HEK293 (cell line): ENCODE measurements at regions of chr9 and their contacts with region 1.

Region 1: DNA sequence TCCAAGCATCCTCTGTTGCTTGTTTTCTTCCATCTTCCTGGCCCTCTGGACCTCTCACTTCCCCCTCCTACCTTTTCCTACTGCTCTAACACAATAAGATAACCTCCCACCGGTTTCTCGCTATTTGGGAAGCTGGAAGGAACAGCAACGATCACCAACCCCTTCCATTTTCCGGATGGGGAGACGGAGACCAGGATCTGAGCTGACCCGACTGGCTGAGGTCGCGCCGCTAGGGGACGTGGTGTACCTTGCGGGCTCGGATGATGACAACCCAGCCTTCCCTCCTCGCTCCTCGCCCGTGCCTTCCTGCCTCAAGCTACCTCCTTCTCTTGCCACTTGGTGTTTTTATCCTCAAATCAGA is 1.9 kb downstream of the LPAR1 start:
- H3K4me3 ChIP-seq: peak overlapping the region; percentile 81
- H3K27ac ChIP-seq: no peak overlapping the region
- H3K4me1 ChIP-seq: peaks cover 8% of the 10 kb centered on the region
- CTCF ChIP-seq: peak; percentile 70

Region 2: DNA sequence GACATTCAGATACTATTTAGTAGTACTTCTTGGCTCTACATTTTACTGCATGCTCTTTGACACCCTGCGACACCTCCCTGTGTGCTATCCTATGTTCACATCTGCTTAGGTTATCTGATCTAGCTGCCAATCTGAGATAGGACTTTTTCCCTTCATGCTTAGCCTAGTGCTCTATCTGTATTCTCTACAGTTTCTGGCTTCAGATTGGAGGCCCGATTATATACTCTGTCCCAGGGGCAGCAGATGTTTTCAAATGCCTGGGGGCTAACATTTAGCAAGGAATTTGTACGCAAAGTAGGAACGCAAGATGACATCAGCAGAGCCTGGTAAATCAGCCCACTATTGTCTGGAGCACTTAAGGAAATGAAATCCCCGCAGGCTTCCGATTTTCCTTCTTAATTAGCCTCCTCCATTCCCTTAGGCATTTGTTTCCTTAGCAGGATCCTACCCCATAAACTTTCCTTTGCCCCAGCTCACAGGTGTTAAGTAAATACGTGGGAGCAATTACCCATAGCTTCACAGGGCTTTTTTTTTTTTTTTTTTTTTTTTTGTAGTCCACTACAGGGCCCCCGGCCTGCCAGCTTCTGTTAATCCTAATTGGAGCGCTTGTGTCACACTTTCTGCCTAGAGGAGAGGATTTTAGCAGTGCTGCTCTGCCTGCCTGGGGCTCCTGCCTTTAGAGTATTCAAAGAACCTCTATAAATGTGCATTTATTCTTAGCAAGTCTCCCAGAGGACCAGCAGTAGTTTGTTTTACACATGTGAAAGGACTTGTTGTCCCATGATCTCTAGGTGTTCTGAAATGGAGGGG is 63.0 kb after region 1 on chr9:
- CTCF ChIA-PET with region 1: interaction called, 10 read pairs
- POLR2A ChIA-PET with region 1: no interaction called
- H3K4me3 ChIP-seq: no peak overlapping the region
- H3K27ac ChIP-seq: peak overlapping the region; percentile 61
- H3K4me1 ChIP-seq: peaks cover 16% of the 10 kb centered on the region
- CTCF ChIP-seq: no peak